Panc1 (cell line): ENCODE measurements at regions of chr10 and their contacts with region 1.

Region 1: DNA sequence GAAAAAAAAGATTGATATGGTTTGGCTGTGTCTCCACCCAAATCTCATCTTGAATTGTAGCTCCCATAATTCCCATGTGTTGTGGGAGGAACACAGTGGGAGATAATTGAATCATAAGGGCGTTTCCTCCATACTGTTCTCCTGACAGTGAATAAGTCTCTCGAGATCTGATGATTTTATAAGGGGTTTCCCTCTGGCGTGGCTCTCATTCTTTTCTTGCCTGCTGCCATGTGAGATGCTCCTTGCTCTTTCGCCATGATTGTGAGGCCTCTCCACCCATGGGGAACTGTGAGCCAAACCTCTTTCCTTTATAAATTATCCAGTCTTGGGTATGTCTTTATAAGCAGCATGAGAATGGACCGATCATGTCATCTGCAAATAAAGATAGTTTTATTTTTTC is 29.4 kb upstream of the MAP3K8 start:
- DNase-seq: no peak
- ATAC-seq: no peak
- H3K4me3 ChIP-seq: no peak overlapping the region
- H3K27ac ChIP-seq: no peak overlapping the region
- H3K4me1 ChIP-seq: no peaks in the 10 kb centered on the region
- H3K27me3 ChIP-seq: no peaks in the 10 kb centered on the region
- CTCF ChIP-seq: no peak

Region 2: GRCh38 chr10:30490289-30491015 is 85.9 kb after region 1 on chr10:
- CTCF ChIA-PET with region 1: no interaction called
- POLR2A ChIA-PET with region 1: interaction called, 22 read pairs
- in situ Hi-C with region 1: no loop called
- intact Hi-C with region 1: no loop called
- DNase-seq: no peak
- ATAC-seq: no peak
- H3K4me3 ChIP-seq: no peak overlapping the region
- H3K27ac ChIP-seq: no peak overlapping the region
- H3K4me1 ChIP-seq: no peaks in the 10 kb centered on the region
- H3K27me3 ChIP-seq: no peaks in the 10 kb centered on the region
- CTCF ChIP-seq: no peak